ENCODE measurements at regions of chr19 and their contacts with region 1.

Region 1: GRCh38 chr19:11881151-11881800 is 6.3 kb upstream of the ZNF69 start:
- DNase-seq: peak; percentile 88
- H3K4me3 Mint-ChIP-seq: no peak overlapping the region
- H3K27ac Mint-ChIP-seq: no peak overlapping the region
- H3K4me1 Mint-ChIP-seq: peaks cover 2% of the 10 kb centered on the region
- H3K27me3 Mint-ChIP-seq: peaks cover 2% of the 10 kb centered on the region

Region 2: DNA sequence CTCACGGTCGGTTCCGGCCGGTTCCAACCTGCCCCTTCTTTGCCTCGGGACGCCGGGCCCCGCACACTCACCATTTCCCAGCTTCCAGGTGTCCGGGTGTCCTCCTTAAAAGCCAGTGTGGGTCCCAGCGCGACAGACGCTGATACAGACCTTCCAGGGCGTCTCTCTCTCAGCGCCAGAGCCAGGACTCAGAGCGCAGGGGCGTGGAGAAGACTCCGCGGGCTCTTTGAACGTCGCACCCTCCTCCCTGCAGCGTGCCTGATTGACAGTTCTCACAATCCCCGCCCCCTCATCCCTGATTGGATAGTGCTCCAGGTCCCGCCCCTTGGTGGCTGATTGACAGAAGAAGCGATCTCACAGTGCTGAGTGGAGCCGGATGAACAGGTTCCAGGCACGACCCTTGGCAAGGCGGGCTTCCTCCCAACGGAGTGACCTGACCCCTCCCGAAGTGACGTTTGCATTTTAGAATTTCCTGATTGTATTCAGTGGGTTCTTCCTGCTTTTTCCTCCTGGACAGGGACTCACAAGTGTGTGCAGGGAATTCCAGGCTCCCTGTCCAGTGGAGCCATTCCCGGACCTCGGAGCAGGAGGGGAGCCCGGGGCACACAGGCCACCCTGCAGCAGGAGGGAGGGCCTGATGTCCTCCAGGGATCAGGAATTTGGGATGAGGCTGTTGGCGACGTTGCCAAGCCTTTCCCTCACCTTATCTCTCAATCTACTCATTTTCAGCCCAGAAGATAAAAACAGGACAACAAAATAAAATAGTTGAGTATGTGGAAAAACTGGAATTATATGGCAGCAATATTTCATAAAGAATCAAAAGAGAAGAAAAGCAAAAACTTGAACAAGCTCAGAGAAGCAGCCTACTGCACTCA is 142.3 kb before region 1 on chr19 and contains the start of gene ZNF823:
- intact Hi-C with region 1: no loop called
- DNase-seq: peak; percentile 99
- H3K4me3 Mint-ChIP-seq: peak within 1 kb of the TSS; percentile 96
- H3K27ac Mint-ChIP-seq: peak within 1 kb of the TSS; percentile 86
- H3K4me1 Mint-ChIP-seq: peaks cover 17% of the 10 kb centered on the region
- H3K27me3 Mint-ChIP-seq: peaks cover 8% of the 10 kb centered on the region
- total RNA-seq, gene ZNF823: 2.4 and 3.0 TPM in 2 replicates

Region 3: DNA sequence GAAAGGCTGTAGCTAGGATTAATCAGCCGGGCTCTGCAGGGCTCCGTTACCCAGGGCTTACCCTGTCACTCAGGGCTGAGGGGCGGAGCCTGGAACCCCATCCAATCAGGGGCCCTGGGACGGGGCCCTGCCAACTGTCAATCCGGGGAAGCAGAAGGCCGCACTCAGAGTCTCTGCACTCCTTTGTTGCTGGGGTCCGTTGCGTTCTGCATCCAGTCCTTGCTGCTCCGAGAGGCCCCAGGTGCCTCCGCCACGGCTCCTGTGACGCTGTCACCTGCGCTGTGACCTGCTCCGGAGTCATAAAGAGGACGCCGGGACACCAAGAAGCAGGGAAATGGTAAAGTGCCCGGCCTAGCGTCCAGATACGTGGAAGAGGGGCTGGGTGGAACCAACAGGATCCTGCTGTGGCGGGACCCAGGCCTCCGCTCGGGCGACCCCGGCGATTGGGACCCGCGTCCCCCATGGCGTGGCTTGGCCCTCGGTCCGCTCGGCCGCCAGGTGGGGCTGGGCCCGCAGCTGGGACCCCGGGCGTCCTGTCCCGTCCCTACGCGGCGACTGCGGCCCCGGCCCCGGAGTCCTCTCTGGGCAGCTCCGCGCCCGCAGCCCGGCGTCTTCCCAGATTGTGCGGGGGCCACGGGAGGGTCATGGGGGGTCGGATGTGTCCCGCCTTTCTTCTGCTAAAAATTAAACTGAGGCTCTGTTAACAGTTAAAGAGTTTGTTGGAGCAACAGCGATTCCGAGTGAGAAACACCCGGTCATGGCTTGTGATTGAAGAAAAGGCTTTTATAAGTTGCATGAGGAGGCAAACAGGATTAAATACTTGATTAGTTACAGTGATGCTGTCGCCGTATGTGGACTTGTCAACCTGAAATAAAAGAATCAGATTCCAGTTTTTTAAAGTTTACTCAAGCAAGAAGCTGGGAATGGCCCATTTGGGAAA is 82.6 kb before region 1 on chr19 and contains the start of gene ZNF491:
- intact Hi-C with region 1: loop called (anchors 5 kb)
- DNase-seq: peak; percentile 91
- H3K4me3 Mint-ChIP-seq: peak within 1 kb of the TSS; percentile 84
- H3K27ac Mint-ChIP-seq: peak within 1 kb of the TSS; percentile 84
- H3K4me1 Mint-ChIP-seq: peaks cover 9% of the 10 kb centered on the region
- H3K27me3 Mint-ChIP-seq: no peaks in the 10 kb centered on the region
- total RNA-seq, gene ZNF491: 0.12 and 0.68 TPM in 2 replicates

Measured in activated CD4-positive, alpha-beta T cell treated with anti-CD3 and anti-CD28 coated beads, Interleukin-2, amount 10 ng/mL, durations not matched to agents 24 days and 14 days (primary cell).